B cell (primary cell): ENCODE measurements at regions of chr22 and their contacts with region 1.

Region 1: GRCh38 chr22:41746567-41747400 is 47.5 kb downstream of the MEI1 start:
- DNase-seq: peak; percentile 73
- ATAC-seq: peak; percentile 96
- H3K4me3 ChIP-seq: peak overlapping the region in 1 of 5 experiments; percentile 26
- H3K4me3 Mint-ChIP-seq: peak overlapping the region; percentile 63
- H3K27ac ChIP-seq: peak overlapping the region; percentile 50 to 62
- H3K27ac Mint-ChIP-seq: peak overlapping the region; percentile 80
- H3K4me1 ChIP-seq: peaks cover 30 to 32% of the 10 kb centered on the region in 2 donors
- H3K4me1 Mint-ChIP-seq: peaks cover 32% of the 10 kb centered on the region
- H3K27me3 ChIP-seq: no peaks in the 10 kb centered on the region
- H3K27me3 Mint-ChIP-seq: no peaks in the 10 kb centered on the region
- CTCF ChIP-seq: peak; percentile 40

Region 2: GRCh38 chr22:41762980-41763779 is 16.4 kb after region 1 on chr22:
- CTCF ChIA-PET with region 1: interaction called, 14 read pairs
- POLR2A ChIA-PET with region 1: no interaction called
- intact Hi-C with region 1: no loop called
- DNase-seq: peak; percentile 60
- ATAC-seq: peak; percentile 47
- H3K4me3 ChIP-seq: no peak overlapping the region
- H3K4me3 Mint-ChIP-seq: no peak overlapping the region
- H3K27ac ChIP-seq: no peak overlapping the region
- H3K27ac Mint-ChIP-seq: no peak overlapping the region
- H3K4me1 ChIP-seq: no peaks in the 10 kb centered on the region
- H3K4me1 Mint-ChIP-seq: peaks cover 6% of the 10 kb centered on the region
- H3K27me3 ChIP-seq: no peaks in the 10 kb centered on the region
- H3K27me3 Mint-ChIP-seq: no peaks in the 10 kb centered on the region
- CTCF ChIP-seq: peak; percentile 68

Region 3: GRCh38 chr22:41780746-41781505 is 34.1 kb after region 1 on chr22:
- CTCF ChIA-PET with region 1: interaction called, 20 read pairs
- POLR2A ChIA-PET with region 1: interaction called, 9 read pairs
- intact Hi-C with region 1: no loop called
- DNase-seq: peak; percentile 94
- ATAC-seq: peak; percentile 96
- H3K4me3 ChIP-seq: peak overlapping the region; percentile 47 to 76 (median 60)
- H3K4me3 Mint-ChIP-seq: peak overlapping the region; percentile 88
- H3K27ac ChIP-seq: peak overlapping the region; percentile 90 to 95
- H3K27ac Mint-ChIP-seq: peak overlapping the region; percentile 98
- H3K4me1 ChIP-seq: peaks cover 26 to 31% of the 10 kb centered on the region in 2 donors
- H3K4me1 Mint-ChIP-seq: peaks cover 37% of the 10 kb centered on the region
- H3K27me3 ChIP-seq: no peaks in the 10 kb centered on the region
- H3K27me3 Mint-ChIP-seq: no peaks in the 10 kb centered on the region
- CTCF ChIP-seq: no peak

Region 4: DNA sequence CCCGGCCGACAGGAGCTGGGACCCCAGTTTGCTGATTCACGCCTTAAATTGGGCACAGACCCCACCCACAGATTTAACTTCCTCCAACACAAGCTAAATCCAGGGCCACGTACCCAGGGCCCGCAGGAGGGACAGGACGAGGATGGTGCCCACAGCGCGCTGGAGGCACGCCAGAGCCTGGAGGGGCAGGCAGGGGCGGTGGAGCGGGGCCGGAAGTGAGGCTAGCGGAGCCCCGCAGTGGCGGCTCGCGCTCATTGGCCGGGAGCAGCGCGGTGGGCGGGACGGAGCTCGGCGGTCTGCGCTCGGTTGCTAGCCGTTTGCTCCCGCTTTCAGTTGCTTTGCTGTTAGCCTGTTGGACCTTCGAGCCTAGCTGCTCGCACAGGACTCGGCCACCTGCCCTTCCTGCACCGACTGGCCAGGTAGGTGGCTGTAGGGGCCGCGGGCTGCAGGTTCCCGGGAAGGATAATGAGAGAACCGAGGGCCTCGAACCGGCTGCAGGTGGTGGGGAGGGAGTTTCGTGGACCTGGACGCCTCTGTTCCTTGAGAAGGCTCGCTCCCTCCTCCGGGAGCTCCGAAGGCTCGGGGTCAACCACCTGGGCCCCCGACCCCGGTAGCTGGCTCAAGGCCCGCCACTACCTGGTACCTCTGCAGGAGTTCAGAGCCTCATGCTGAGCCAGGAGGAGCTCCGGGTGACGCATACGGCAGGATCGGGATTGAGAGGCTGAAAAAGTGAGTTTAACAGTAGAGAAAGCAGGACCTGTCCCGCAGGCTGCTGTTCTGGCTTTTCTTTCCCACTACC is 53.8 kb after region 1 on chr22 and contains the start of gene CCDC134:
- CTCF ChIA-PET with region 1: interaction called, 20 read pairs
- POLR2A ChIA-PET with region 1: interaction called, 7 read pairs
- intact Hi-C with region 1: loop called (anchors 5 kb)
- DNase-seq: peak; percentile 91
- ATAC-seq: peak; percentile 98
- H3K4me3 ChIP-seq: peak within 1 kb of the TSS; percentile 65 to 98 (median 96)
- H3K4me3 Mint-ChIP-seq: peak within 1 kb of the TSS; percentile 98
- H3K27ac ChIP-seq: peak within 1 kb of the TSS; percentile 90 to 91
- H3K27ac Mint-ChIP-seq: peak within 1 kb of the TSS; percentile 99
- H3K4me1 ChIP-seq: peaks cover 19 to 22% of the 10 kb centered on the region in 2 donors
- H3K4me1 Mint-ChIP-seq: peaks cover 24% of the 10 kb centered on the region
- H3K27me3 ChIP-seq: no peaks in the 10 kb centered on the region
- H3K27me3 Mint-ChIP-seq: no peaks in the 10 kb centered on the region
- CTCF ChIP-seq: no peak
- total RNA-seq, gene CCDC134: 17.4 and 18.1 TPM in 2 replicates

Region 5: DNA sequence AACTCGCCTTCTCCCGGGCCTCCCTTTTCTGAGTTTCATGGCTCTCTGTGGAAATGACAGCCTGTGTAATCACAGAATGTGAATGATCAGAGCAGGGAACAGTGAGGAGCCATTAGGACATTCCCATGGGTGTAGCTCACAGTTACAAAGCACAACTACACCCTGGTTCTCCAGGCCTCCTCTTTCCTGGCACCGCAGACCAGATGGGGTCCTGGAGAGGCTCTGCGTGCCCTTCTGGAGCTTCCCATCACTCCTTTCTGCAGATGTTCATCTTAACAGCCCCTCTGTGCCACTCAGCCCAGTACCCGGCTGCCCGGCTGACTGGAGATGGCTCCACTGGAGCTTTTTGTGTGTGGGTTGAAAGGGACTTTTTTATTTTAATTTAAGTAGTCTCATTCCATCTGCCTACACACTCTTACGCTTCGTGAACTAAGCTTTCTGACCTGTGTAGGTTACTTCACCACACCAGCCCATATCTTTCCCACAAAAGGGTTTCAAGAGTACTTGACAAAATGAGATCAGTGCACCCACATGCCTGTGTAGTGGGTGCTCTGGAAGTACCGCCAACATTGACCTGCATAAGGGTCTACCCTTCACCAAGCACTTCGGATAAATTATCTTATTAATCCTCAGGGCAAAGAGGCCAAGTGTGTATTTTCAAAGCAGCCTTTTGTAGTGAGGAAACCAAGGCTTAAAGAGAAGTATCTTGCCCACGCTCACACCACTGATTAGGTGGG is 115.9 kb after region 1 on chr22:
- CTCF ChIA-PET with region 1: interaction called, 9 read pairs
- POLR2A ChIA-PET with region 1: no interaction called
- intact Hi-C with region 1: loop called (anchors 1 kb)
- DNase-seq: peak; percentile 61
- ATAC-seq: peak; percentile 61
- H3K4me3 ChIP-seq: peak overlapping the region in 4 of 5 experiments; percentile 0 to 29 (median 8)
- H3K4me3 Mint-ChIP-seq: peak overlapping the region; percentile 80
- H3K27ac ChIP-seq: peak overlapping the region; percentile 92 to 95
- H3K27ac Mint-ChIP-seq: peak overlapping the region; percentile 95
- H3K4me1 ChIP-seq: peaks cover 73 to 87% of the 10 kb centered on the region in 2 donors
- H3K4me1 Mint-ChIP-seq: peaks cover 78% of the 10 kb centered on the region
- H3K27me3 ChIP-seq: no peaks in the 10 kb centered on the region
- H3K27me3 Mint-ChIP-seq: no peaks in the 10 kb centered on the region
- CTCF ChIP-seq: no peak